ENCODE measurements at regions of chr1 and their contacts with region 1.

Region 1: GRCh38 chr1:160675641-160676410 is 29.0 kb upstream of the SLAMF1 start:
- DNase-seq: peak; percentile 46 to 84 (median 69)
- ATAC-seq: peak; percentile 77 to 84 (median 80)
- H3K4me3 ChIP-seq: no peak overlapping the region
- H3K4me3 Mint-ChIP-seq: peak overlapping the region in 1 of 3 donors; percentile 1
- H3K27ac ChIP-seq: peak overlapping the region; percentile 58
- H3K27ac Mint-ChIP-seq: peak overlapping the region; percentile 78 to 85
- H3K4me1 ChIP-seq: peaks cover 24 to 33% of the 10 kb centered on the region in 2 experiments
- H3K4me1 Mint-ChIP-seq: peaks cover 9 to 18% (median 10%) of the 10 kb centered on the region in 3 donors
- H3K27me3 ChIP-seq: no peaks in the 10 kb centered on the region
- H3K27me3 Mint-ChIP-seq: no peaks in the 10 kb centered on the region

Region 2: DNA sequence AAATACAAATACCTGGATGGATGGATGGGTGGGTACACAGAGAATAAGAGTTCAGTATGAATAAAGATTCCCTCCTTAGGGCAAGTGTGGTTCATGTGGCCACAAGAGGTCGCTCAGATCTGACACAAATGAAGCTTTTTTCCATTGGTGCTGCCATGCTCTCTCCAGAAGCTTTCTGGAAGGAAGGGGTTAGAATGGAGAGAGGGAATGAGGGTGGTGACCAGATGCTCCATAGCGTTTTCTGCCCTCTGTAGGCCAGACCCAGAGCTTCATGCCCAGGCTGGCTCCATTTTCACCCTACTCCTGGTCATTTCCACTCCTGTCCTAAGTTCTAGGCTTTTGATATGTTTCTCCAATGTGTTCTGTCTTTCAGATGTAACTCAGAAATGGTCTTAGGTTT is 876.9 kb before region 1 on chr1:
- CTCF ChIA-PET with region 1: no interaction called
- POLR2A ChIA-PET with region 1: no interaction called
- DNase-seq: peak in 27 of 35 experiments; percentile 7 to 73 (median 33)
- ATAC-seq: peak; percentile 33 to 64 (median 48)
- H3K4me3 ChIP-seq: no peak overlapping the region
- H3K4me3 Mint-ChIP-seq: no peak overlapping the region
- H3K27ac ChIP-seq: no peak overlapping the region
- H3K27ac Mint-ChIP-seq: no peak overlapping the region
- H3K4me1 ChIP-seq: peaks cover 12 to 34% of the 10 kb centered on the region in 2 experiments
- H3K4me1 Mint-ChIP-seq: peaks cover 24 to 38% (median 30%) of the 10 kb centered on the region in 3 donors
- H3K27me3 ChIP-seq: peaks cover 0 to 5% of the 10 kb centered on the region in 2 experiments
- H3K27me3 Mint-ChIP-seq: peaks cover 2 to 8% of the 10 kb centered on the region in 2 donors

Region 3: DNA sequence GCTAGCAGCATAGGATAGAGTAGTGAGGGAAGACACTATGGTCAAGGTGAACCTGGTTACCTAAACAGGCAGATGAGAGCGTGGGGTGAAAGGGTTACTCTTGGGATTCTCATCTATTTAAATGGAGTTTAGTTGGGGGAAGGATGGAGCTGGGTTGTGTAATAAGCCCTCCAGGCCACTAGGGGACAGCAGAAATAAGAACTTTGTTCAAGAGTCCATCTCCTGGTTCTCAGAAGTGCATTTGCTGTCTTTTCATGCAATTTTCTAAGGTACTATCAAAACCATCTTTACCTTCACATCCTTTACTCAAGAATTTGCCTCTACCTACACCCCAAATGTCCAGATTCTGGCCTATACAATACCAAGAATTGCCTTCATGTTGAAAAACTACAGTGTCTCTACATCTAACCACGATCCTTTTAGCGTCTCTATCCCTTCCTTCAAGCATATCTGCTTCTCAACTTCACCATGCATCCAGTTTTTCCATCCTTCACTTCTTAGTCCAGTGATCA is 57.0 kb before region 1 on chr1:
- CTCF ChIA-PET with region 1: interaction called, 8 to 30 read pairs
- POLR2A ChIA-PET with region 1: no interaction called
- DNase-seq: peak in 27 of 35 experiments; percentile 15 to 72 (median 37)
- ATAC-seq: peak in 3 of 4 experiments; percentile 37 to 52 (median 42)
- H3K4me3 ChIP-seq: no peak overlapping the region
- H3K4me3 Mint-ChIP-seq: no peak overlapping the region
- H3K27ac ChIP-seq: peak overlapping the region; percentile 24
- H3K27ac Mint-ChIP-seq: peak overlapping the region; percentile 46 to 55
- H3K4me1 ChIP-seq: peaks cover 18 to 29% of the 10 kb centered on the region in 2 experiments
- H3K4me1 Mint-ChIP-seq: peaks cover 60 to 72% (median 67%) of the 10 kb centered on the region in 3 donors
- H3K27me3 ChIP-seq: no peaks in the 10 kb centered on the region
- H3K27me3 Mint-ChIP-seq: no peaks in the 10 kb centered on the region

Region 4: GRCh38 chr1:160639652-160640051 is 36.2 kb before region 1 on chr1:
- CTCF ChIA-PET with region 1: interaction called in 1 of 2 experiments, 11 read pairs
- POLR2A ChIA-PET with region 1: no interaction called
- DNase-seq: peak in 1 of 35 experiments; percentile 56
- ATAC-seq: no peak
- H3K4me3 ChIP-seq: peak overlapping the region in 1 of 2 donors; percentile 1
- H3K4me3 Mint-ChIP-seq: peak overlapping the region; percentile 70 to 98 (median 75)
- H3K27ac ChIP-seq: peak overlapping the region; percentile 90
- H3K27ac Mint-ChIP-seq: peak overlapping the region; percentile 96 to 98
- H3K4me1 ChIP-seq: peaks cover 70 to 73% of the 10 kb centered on the region in 2 experiments
- H3K4me1 Mint-ChIP-seq: peaks cover 94 to 97% (median 94%) of the 10 kb centered on the region in 3 donors
- H3K27me3 ChIP-seq: no peaks in the 10 kb centered on the region
- H3K27me3 Mint-ChIP-seq: no peaks in the 10 kb centered on the region

Region 5: DNA sequence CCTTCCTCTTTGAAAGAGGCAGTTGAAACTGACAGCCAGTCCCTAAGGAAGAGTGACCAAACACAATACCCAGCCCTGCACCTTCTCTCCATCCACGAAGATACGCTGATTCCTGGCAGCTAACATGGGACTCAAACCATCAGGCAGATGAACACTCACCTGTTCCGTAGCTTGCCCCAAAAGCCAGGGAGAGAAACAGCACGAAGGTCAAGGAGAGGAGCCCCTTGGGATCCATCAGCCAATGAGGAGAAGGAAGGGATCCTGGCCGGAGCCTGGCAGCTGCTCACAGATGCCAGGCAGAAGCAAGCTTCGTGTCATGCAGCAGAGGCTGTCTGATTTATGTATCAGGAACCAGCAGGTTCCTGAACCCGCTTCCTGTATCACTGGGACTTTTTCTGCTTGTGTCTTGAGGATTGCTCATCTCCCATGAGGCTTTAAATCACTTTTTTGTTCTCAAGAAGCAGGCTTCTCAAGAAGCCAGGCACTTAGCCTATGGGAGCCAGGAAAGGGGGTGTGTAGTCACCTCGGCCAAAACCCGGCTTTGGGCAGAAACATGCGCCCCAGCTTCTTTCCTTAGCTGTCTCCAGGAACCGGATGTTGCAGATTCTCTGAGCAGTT is 29.0 kb before region 1 on chr1 and contains the start of gene SLAMF1:
- CTCF ChIA-PET with region 1: interaction called, 4 to 13 read pairs
- POLR2A ChIA-PET with region 1: interaction called in 1 of 2 experiments, 8 read pairs
- DNase-seq: peak in 9 of 35 experiments; percentile 12 to 68 (median 35)
- ATAC-seq: peak; percentile 69 to 83 (median 74)
- H3K4me3 ChIP-seq: peak within 1 kb of the TSS; percentile 79 to 95
- H3K4me3 Mint-ChIP-seq: peak within 1 kb of the TSS; percentile 93 to 98 (median 96)
- H3K27ac ChIP-seq: peak within 1 kb of the TSS; percentile 70
- H3K27ac Mint-ChIP-seq: peak within 1 kb of the TSS; percentile 97 to 100
- H3K4me1 ChIP-seq: peaks cover 33 to 40% of the 10 kb centered on the region in 2 experiments
- H3K4me1 Mint-ChIP-seq: peaks cover 76 to 83% (median 81%) of the 10 kb centered on the region in 3 donors
- H3K27me3 ChIP-seq: no peaks in the 10 kb centered on the region
- H3K27me3 Mint-ChIP-seq: no peaks in the 10 kb centered on the region
- total RNA-seq, gene SLAMF1: 19.4 to 38.7 (median 30.7) TPM

Region 6: GRCh38 chr1:160664573-160665051 is 11.2 kb before region 1 on chr1:
- CTCF ChIA-PET with region 1: interaction called, 10 to 12 read pairs
- POLR2A ChIA-PET with region 1: interaction called in 1 of 2 experiments, 3 read pairs
- DNase-seq: peak in 18 of 35 experiments; percentile 10 to 65 (median 30)
- ATAC-seq: peak; percentile 89 to 93 (median 92)
- H3K4me3 ChIP-seq: peak overlapping the region; percentile 4 to 38
- H3K4me3 Mint-ChIP-seq: peak overlapping the region; percentile 43 to 70 (median 50)
- H3K27ac ChIP-seq: peak overlapping the region; percentile 81
- H3K27ac Mint-ChIP-seq: peak overlapping the region; percentile 90 to 92
- H3K4me1 ChIP-seq: peaks cover 42 to 43% of the 10 kb centered on the region in 2 experiments
- H3K4me1 Mint-ChIP-seq: peaks cover 66 to 83% (median 67%) of the 10 kb centered on the region in 3 donors
- H3K27me3 ChIP-seq: no peaks in the 10 kb centered on the region
- H3K27me3 Mint-ChIP-seq: no peaks in the 10 kb centered on the region

Region 7: GRCh38 chr1:160711602-160712311 is 35.9 kb after region 1 on chr1 and contains the start of gene CD48:
- CTCF ChIA-PET with region 1: interaction called, 3 to 52 read pairs
- POLR2A ChIA-PET with region 1: interaction called in 1 of 2 experiments, 3 read pairs
- DNase-seq: peak in 34 of 35 experiments; percentile 24 to 79 (median 48)
- ATAC-seq: peak; percentile 54 to 77 (median 60)
- H3K4me3 ChIP-seq: peak within 1 kb of the TSS; percentile 78 to 94
- H3K4me3 Mint-ChIP-seq: no peak within 1 kb of the TSS
- H3K27ac ChIP-seq: peak within 1 kb of the TSS; percentile 95
- H3K27ac Mint-ChIP-seq: no peak within 1 kb of the TSS
- H3K4me1 ChIP-seq: peaks cover 50 to 51% of the 10 kb centered on the region in 2 experiments
- H3K4me1 Mint-ChIP-seq: peaks cover 39 to 50% (median 47%) of the 10 kb centered on the region in 3 donors
- H3K27me3 ChIP-seq: no peaks in the 10 kb centered on the region
- H3K27me3 Mint-ChIP-seq: no peaks in the 10 kb centered on the region
- total RNA-seq, gene CD48: 249 to 393 (median 273) TPM

Measured in T-cell (primary cell).